Aorta (tissue), 5 donors: ENCODE measurements at regions of chr1 and their contacts with region 1.

Region 1: GRCh38 chr1:13675151-13675651 is 24.8 kb upstream of the PRDM2 start:
- DNase-seq: no peak
- ATAC-seq: no peak
- H3K4me3 ChIP-seq: no peak overlapping the region
- H3K27ac ChIP-seq: no peak overlapping the region
- H3K4me1 ChIP-seq: no peaks in the 10 kb centered on the region
- H3K27me3 ChIP-seq: no peaks in the 10 kb centered on the region

Region 2: GRCh38 chr1:13651279-13651678 is 23.9 kb before region 1 on chr1:
- intact Hi-C with region 1: no loop called
- DNase-seq: no peak
- ATAC-seq: no peak
- H3K4me3 ChIP-seq: no peak overlapping the region
- H3K27ac ChIP-seq: no peak overlapping the region
- H3K4me1 ChIP-seq: no peaks in the 10 kb centered on the region
- H3K27me3 ChIP-seq: no peaks in the 10 kb centered on the region

Region 3: GRCh38 chr1:13819642-13820041 is 144.4 kb after region 1 on chr1:
- intact Hi-C with region 1: loop called in 1 of 2 experiments (anchors 5 kb)
- DNase-seq: no peak
- ATAC-seq: no peak
- H3K4me3 ChIP-seq: no peak overlapping the region
- H3K27ac ChIP-seq: no peak overlapping the region
- H3K4me1 ChIP-seq: no peaks in the 10 kb centered on the region
- H3K27me3 ChIP-seq: no peaks in the 10 kb centered on the region

Region 4: GRCh38 chr1:13851726-13852125 is 176.5 kb after region 1 on chr1:
- intact Hi-C with region 1: no loop called
- DNase-seq: no peak
- ATAC-seq: no peak
- H3K4me3 ChIP-seq: no peak overlapping the region
- H3K27ac ChIP-seq: no peak overlapping the region
- H3K4me1 ChIP-seq: no peaks in the 10 kb centered on the region
- H3K27me3 ChIP-seq: no peaks in the 10 kb centered on the region

Region 5: GRCh38 chr1:13948888-13949391 is 273.7 kb after region 1 on chr1:
- intact Hi-C with region 1: loop called in 1 of 2 experiments (anchors 5 kb)
- DNase-seq: peak in 1 of 2 donors; percentile 50
- ATAC-seq: peak; percentile 87
- H3K4me3 ChIP-seq: no peak overlapping the region
- H3K27ac ChIP-seq: no peak overlapping the region
- H3K4me1 ChIP-seq: no peaks in the 10 kb centered on the region
- H3K27me3 ChIP-seq: no peaks in the 10 kb centered on the region